Gastrocnemius medialis (tissue), 4 donors: ENCODE measurements at regions of chr7 and their contacts with region 1.

Region 1: DNA sequence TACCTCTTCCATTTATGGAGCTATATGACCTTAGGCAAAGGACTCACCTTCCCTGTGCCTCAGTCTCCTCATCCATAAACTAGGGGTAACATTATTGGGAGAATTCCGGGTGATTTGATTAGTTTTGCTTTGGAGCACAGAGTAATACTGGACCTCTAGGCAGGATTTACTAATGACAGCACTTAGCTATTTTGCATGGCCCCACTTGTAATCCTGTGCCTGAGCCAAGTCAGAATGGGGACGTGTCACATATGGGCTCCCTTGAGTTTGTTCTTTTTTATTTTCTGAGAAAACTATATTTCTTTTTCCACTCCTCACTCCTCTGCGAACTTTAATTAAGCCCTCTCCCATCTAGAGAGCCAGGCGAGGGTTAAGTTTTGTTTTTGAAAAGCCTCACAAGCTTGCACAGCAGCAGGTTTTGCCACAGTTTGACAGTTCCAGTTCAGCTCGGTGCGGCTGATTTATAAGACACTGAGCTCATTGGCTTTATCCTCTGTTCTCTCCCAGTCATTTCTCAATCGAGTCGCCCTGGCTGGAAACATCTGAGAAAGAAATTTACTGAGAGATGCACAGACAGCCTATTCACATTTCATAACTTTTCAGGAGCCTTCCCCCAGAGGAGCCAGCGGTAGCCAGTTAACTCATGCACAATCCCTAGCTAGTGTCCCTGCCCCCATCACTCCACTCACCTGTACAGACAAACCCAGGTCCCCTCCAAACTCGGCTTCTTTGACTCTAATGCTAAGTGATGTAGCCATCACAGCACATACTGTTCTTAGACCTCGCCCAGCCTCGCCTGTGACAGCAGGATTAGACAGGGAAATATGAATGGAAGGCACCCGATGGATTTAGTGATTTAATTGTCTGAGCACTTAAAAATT is 441.9 kb upstream of the NPVF start:
- DNase-seq: peak; percentile 71 to 77
- ATAC-seq: peak; percentile 94 to 95
- H3K4me3 ChIP-seq: peak overlapping the region in 1 of 4 donors; percentile 8
- H3K27ac ChIP-seq: peak overlapping the region; percentile 59 to 90 (median 70)
- H3K4me1 ChIP-seq: peaks cover 21 to 39% of the 10 kb centered on the region in 2 donors
- H3K27me3 ChIP-seq: no peaks in the 10 kb centered on the region
- CTCF ChIP-seq: no peak
- POLR2A ChIP-seq: no peak

Region 2: GRCh38 chr7:25714013-25714412 is 43.8 kb after region 1 on chr7:
- in situ Hi-C with region 1: no loop called
- intact Hi-C with region 1: loop called (anchors 5 kb)
- DNase-seq: no peak
- ATAC-seq: peak; percentile 58 to 77
- H3K4me3 ChIP-seq: no peak overlapping the region
- H3K27ac ChIP-seq: peak overlapping the region in 3 of 4 donors; percentile 67 to 85 (median 71)
- H3K4me1 ChIP-seq: peaks cover 41 to 56% of the 10 kb centered on the region in 2 donors
- H3K27me3 ChIP-seq: no peaks in the 10 kb centered on the region
- CTCF ChIP-seq: no peak
- POLR2A ChIP-seq: no peak

Region 3: DNA sequence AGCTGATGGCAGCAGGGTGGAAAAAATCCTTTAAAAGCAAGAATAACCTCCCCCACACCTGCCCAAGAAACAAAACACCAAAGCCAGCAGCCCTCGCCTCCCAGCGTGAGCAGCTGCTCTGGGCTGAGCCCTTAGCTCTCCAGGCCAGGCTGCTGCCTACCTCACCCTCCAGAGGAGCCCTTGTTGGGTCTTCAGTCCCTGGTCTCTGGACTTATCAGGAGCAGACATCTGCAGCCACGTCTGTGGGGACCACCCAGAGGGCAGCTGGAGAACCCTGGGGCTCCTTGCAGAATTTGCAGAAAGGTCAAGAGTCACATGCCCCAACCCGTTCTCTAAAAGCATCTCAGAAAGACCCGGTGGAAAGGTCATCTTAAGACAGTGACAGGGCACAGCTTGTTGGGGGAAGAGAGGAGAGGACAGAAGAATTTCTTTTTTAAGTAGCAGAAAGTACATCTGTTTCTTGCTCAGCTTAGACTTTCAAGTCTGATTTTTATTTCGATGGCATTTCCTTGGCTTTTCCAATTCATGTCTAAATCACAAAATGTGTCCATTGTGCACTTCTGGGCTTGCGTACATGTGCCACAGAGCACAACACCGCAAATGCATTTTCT is 56.1 kb after region 1 on chr7:
- in situ Hi-C with region 1: no loop called
- intact Hi-C with region 1: no loop called
- DNase-seq: no peak
- ATAC-seq: no peak
- H3K4me3 ChIP-seq: no peak overlapping the region
- H3K27ac ChIP-seq: peak overlapping the region in 3 of 4 donors; percentile 2 to 48 (median 34)
- H3K4me1 ChIP-seq: peaks cover 0 to 14% of the 10 kb centered on the region in 2 donors
- H3K27me3 ChIP-seq: no peaks in the 10 kb centered on the region
- CTCF ChIP-seq: no peak
- POLR2A ChIP-seq: no peak

Region 4: DNA sequence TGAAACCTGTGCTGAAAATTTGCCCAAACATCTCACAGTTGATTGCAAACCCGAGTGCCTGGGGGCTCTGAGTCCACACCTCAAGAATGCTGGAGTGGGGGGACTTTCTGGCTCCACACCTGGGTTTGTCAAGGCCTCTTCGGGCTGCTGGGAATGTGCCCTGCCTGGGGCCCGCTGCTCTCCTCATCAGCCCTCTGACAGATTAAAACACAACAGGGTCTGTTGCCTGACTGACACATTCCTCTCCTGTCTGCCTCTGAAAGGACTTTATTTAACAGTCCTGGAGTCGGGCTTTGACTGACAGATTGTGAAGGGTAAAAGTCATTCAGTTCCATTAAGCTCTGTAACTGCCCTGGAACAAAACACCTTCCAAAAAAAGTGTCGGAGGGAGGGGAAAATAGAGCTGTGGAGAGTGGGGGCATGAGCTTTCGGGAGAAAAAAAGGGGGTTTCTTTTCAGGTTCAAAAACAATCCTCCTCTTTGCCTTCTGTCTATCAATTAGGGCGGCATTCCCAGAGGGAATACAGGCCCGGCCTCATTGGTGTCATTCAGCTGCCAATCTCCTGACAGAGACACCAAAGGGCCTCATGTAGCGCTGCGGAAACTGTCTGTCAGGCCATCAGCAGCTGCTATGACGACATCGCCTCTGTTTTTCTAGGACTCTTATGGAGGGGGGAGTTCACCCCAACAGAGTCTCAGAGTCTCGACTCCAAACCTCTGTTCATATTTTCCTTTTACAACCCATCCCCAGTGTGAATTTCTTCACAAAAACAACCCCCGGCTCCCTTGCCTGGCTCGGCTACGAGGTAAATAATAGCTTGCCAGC is 83.0 kb after region 1 on chr7:
- in situ Hi-C with region 1: no loop called
- intact Hi-C with region 1: loop called (anchors 5 kb)
- DNase-seq: peak; percentile 59 to 60
- ATAC-seq: peak; percentile 51 to 68
- H3K4me3 ChIP-seq: no peak overlapping the region
- H3K27ac ChIP-seq: peak overlapping the region; percentile 86 to 94 (median 90)
- H3K4me1 ChIP-seq: peaks cover 38 to 61% of the 10 kb centered on the region in 2 donors
- H3K27me3 ChIP-seq: no peaks in the 10 kb centered on the region
- CTCF ChIP-seq: no peak
- POLR2A ChIP-seq: no peak

Region 5: DNA sequence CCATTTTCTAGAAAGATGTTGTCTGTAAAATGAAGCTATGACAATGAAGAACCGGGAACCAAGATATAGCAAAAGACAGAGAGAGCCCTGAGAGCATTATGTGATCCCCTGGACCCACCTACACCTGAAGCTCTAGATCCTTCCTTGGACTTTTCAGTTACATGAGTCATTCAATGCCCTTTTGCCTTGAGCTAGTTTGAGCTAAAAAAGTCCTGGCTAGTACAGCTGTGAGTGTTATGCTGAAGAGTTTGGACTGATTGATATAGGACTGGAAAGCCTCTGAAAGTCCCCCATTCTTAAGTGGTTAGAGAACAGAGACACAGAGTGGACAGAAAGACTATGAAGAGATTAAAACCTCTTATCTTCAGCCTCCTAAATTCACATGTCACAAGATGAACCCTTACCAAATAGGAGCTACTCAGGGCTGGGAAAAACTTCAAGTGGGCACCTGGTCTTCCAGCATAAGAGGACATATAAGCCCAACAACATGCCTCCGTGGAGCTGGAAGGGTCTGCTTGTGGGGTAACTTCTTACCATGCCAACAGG is 95.0 kb after region 1 on chr7:
- in situ Hi-C with region 1: loop called in 1 of 4 experiments (anchors 5 kb)
- intact Hi-C with region 1: no loop called
- DNase-seq: peak in 1 of 2 donors; percentile 35
- ATAC-seq: peak; percentile 34 to 51
- H3K4me3 ChIP-seq: no peak overlapping the region
- H3K27ac ChIP-seq: peak overlapping the region; percentile 77 to 93 (median 84)
- H3K4me1 ChIP-seq: peaks cover 21 to 24% of the 10 kb centered on the region in 2 donors
- H3K27me3 ChIP-seq: no peaks in the 10 kb centered on the region
- CTCF ChIP-seq: no peak
- POLR2A ChIP-seq: no peak

Region 6: GRCh38 chr7:27179503-27180430 is 1509.6 kb after region 1 on chr7:
- in situ Hi-C with region 1: no loop called
- intact Hi-C with region 1: loop called (anchors 10 kb)
- DNase-seq: peak; percentile 65 to 79
- ATAC-seq: peak; percentile 40 to 53
- H3K4me3 ChIP-seq: peak overlapping the region; percentile 47 to 56 (median 52)
- H3K27ac ChIP-seq: peak overlapping the region; percentile 90 to 99 (median 95)
- H3K4me1 ChIP-seq: peaks cover 43 to 61% of the 10 kb centered on the region in 2 donors
- H3K27me3 ChIP-seq: peaks cover 0 to 8% (median 3%) of the 10 kb centered on the region in 3 donors
- CTCF ChIP-seq: peak; percentile 91 to 96 (median 95)
- POLR2A ChIP-seq: peak; percentile 79 to 90